GM12878 (cell line): ENCODE measurements at regions of chrX and their contacts with region 1.

Region 1: GRCh38 chrX:120514236-120514635 is 45.1 kb upstream of the LAMP2 start:
- DNase-seq: no peak
- ATAC-seq: 0 out of 3 replicates have a peak, but pooled peaks have one; percentile 54
- H3K4me3 ChIP-seq: no peak overlapping the region
- H3K27ac ChIP-seq: no peak overlapping the region
- H3K4me1 ChIP-seq: no peaks in the 10 kb centered on the region
- H3K27me3 ChIP-seq: no peaks in the 10 kb centered on the region
- CTCF ChIP-seq: peak in 2 of 3 experiments; percentile 13 to 34; a peak in 3 of 6 replicates
- EP300 ChIP-seq: no peak
- POLR2A ChIP-seq: no peak
- RAD21 ChIP-seq: peak; percentile 29; the same call in 1 of the 2 replicates

Region 2: DNA sequence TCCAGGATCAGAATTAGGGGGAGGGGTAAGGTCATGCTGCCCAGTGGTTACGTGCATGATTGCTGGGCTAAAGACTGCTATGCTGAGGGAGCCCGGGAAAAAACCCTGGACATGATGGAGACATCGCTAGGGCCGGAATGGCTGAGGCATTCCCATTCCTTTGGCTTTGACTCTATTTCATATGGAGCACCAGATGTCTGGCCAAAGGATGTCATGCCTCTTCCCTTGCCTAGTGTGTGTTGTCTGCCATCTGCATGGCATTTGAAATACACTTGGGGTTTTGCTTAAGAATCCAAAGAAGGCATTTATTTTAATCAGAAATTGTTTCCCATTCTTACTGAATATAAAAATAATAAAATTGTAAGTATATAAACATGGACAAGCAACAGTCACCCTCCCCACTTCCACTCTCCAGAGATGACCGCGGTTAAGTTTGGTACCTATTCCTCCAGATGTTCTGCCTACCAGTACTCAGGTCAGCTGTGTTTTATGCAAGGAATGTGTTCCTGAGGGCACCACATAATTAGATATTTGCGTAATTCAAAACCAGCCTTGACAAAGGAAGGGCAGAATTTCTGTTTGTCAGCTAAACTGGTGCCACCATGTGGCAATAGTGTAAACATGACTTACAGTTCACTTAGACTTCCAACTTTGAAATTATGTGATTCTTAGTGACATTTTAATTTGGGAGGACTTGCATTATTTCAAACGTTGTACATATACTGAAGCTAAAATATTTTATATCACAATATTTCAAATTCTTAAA is 255.5 kb after region 1 on chrX:
- CTCF ChIA-PET with region 1: interaction called, 5 read pairs
- POLR2A ChIA-PET with region 1: no interaction called
- RAD21 ChIA-PET with region 1: no interaction called
- SMC1A ChIA-PET with region 1: interaction called, 3 read pairs
- in situ Hi-C with region 1: loop called (anchors 25 kb)
- intact Hi-C with region 1: no loop called
- DNase-seq: no peak
- ATAC-seq: peak; percentile 51; the same call in 2 of the 3 replicates
- H3K4me3 ChIP-seq: no peak overlapping the region
- H3K27ac ChIP-seq: no peak overlapping the region
- H3K4me1 ChIP-seq: no peaks in the 10 kb centered on the region
- H3K27me3 ChIP-seq: no peaks in the 10 kb centered on the region
- CTCF ChIP-seq: peak; percentile 33 to 47 (median 46); a peak in 4 of 6 replicates
- EP300 ChIP-seq: no peak
- POLR2A ChIP-seq: no peak
- RAD21 ChIP-seq: peak; percentile 74

Region 3: DNA sequence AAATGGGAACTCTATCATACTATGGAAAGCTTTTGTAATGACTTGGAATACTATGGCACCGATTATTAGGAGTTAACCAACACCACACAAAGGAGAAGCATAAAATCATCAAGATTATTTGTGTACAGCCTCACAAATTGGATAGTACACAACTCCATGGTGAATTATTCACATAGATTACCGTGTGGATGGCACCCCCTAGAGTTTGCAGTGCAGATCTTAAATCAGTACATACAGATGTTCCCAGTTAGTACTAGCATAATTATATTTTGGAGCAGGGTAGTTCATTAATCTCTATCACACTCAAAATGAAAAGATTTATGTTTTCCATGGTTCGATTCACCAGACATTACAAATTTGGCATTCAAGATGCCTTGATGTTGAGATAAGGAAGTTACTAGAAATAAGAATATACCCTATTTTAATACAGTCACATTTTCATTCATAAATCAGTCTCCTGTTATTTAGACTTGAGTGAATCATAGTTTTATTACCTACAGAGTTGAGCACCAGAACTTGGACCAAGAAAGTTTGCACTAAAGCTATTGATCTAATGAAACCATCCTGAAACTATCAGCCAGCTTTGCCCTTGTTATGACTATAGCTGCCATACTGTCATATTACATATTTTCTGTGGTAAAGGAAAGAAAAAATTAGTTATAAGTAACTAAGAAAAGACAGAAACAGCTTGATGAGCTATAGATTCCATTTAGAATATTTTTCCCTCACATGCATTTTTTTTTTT is 1065.0 kb after region 1 on chrX:
- CTCF ChIA-PET with region 1: no interaction called
- POLR2A ChIA-PET with region 1: no interaction called
- RAD21 ChIA-PET with region 1: no interaction called
- SMC1A ChIA-PET with region 1: no interaction called
- in situ Hi-C with region 1: loop called (anchors 25 kb)
- intact Hi-C with region 1: no loop called
- DNase-seq: peak; percentile 4
- ATAC-seq: peak; percentile 92
- H3K4me3 ChIP-seq: no peak overlapping the region
- H3K27ac ChIP-seq: no peak overlapping the region
- H3K4me1 ChIP-seq: no peaks in the 10 kb centered on the region
- H3K27me3 ChIP-seq: no peaks in the 10 kb centered on the region
- CTCF ChIP-seq: peak; percentile 44 to 54 (median 51); a peak in 5 of 6 replicates
- EP300 ChIP-seq: no peak
- POLR2A ChIP-seq: no peak
- RAD21 ChIP-seq: peak; percentile 74